ENCODE measurements at regions of chr6 and their contacts with region 1.

Region 1: GRCh38 chr6:129893640-129894039 is 32.5 kb upstream of the TMEM244 start:
- DNase-seq: no peak
- CTCF ChIP-seq: peak; percentile 39

Region 2: GRCh38 chr6:129938249-129939020 is 44.8 kb after region 1 on chr6:
- CTCF ChIA-PET with region 1: interaction called, 12 read pairs
- POLR2A ChIA-PET with region 1: no interaction called
- DNase-seq: no peak
- CTCF ChIP-seq: no peak